ENCODE measurements at regions of chr1 and their contacts with region 1.

Region 1: DNA sequence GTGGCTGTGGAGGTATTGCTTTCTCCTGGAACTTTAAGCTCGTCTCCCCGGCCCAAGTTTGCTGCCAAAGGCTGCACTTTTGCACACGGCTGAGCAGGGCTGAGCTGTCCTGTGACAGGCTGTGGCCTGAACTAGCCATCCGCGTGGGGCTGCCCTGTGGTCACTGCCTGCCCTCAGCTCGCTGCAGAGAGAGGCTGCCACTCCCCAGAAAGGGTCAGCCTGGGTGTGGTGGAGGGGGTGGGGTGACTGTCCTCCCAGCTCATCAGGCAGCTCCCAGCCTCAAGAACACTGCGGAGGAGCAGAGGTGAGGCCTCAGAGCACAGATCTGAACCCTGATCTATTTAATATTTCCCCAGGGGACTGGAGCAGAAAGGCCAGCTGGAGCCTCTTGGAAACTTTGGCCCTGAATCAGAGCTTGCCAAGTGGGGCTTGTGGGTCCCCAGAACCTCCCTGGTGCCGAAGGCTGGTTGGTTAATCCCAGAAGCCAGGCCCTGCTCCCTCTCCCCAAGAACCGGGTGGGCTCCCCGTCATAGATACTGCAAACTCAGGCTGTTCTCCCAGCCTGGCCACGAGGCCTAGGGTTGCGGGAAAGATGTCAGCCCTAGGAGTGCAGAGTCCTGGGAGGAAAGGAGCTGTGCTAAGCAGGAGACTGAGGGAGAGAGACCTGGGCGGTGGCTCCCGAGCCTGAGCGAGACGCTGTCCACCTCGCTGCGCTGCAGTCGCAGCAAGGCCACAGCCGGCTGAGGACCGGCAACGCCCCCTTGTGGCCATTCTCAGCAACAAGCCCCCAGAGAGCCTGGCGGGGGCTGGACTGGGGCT is 125.1 kb upstream of the IPO9 start:
- DNase-seq: peak in 1 of 2 donors; percentile 89
- H3K4me3 ChIP-seq: no peak overlapping the region
- H3K27ac ChIP-seq: peak overlapping the region; percentile 57 to 61
- H3K4me1 ChIP-seq: peaks cover 3 to 14% of the 10 kb centered on the region in 2 donors
- H3K27me3 ChIP-seq: no peaks in the 10 kb centered on the region
- CTCF ChIP-seq: peak; percentile 95 to 97 (median 96)

Region 2: DNA sequence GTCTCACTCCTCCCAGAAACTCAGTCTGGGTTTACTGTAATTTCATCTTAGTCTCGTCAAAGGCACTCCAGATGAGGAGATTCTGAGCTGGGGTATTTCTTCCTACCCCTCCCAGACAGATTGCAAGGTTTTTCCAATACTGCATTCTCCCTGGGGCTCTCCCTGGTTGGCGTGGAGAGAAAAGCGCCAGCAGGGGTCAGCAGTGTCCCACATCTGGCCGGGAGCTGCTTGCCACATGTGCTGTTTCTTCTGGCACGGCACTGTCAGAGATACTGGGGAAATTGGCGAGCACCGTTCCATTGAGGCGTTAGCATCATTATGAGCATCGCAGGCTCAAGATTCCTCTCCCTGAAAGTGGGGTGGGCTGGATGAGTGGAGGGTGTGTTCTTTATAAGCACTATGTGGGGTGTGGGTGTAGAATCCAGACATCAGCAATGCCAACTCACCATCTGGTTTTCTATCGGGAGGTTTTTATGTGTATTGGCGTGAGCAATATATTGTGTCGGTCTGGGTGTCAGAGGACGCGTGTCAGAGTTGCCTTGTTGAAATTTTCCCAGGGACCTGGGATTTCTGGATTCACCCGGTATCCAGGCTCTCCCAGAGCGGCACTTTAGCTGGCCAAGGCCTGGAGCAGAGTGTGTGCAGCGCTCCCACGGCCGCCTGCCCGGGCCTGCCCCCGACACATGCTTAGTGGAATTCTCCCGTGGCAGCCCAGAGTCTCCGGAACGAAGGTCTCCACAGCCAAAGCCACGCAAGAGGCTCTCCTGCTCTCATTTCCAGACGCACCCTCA is 172.9 kb before region 1 on chr1:
- intact Hi-C with region 1: loop called (anchors 1 kb)
- DNase-seq: peak; percentile 51 to 95
- H3K4me3 ChIP-seq: no peak overlapping the region
- H3K27ac ChIP-seq: peak overlapping the region; percentile 51 to 59
- H3K4me1 ChIP-seq: peaks cover 20 to 45% of the 10 kb centered on the region in 2 donors
- H3K27me3 ChIP-seq: no peaks in the 10 kb centered on the region
- CTCF ChIP-seq: peak; percentile 89 to 96 (median 93)

Region 3: DNA sequence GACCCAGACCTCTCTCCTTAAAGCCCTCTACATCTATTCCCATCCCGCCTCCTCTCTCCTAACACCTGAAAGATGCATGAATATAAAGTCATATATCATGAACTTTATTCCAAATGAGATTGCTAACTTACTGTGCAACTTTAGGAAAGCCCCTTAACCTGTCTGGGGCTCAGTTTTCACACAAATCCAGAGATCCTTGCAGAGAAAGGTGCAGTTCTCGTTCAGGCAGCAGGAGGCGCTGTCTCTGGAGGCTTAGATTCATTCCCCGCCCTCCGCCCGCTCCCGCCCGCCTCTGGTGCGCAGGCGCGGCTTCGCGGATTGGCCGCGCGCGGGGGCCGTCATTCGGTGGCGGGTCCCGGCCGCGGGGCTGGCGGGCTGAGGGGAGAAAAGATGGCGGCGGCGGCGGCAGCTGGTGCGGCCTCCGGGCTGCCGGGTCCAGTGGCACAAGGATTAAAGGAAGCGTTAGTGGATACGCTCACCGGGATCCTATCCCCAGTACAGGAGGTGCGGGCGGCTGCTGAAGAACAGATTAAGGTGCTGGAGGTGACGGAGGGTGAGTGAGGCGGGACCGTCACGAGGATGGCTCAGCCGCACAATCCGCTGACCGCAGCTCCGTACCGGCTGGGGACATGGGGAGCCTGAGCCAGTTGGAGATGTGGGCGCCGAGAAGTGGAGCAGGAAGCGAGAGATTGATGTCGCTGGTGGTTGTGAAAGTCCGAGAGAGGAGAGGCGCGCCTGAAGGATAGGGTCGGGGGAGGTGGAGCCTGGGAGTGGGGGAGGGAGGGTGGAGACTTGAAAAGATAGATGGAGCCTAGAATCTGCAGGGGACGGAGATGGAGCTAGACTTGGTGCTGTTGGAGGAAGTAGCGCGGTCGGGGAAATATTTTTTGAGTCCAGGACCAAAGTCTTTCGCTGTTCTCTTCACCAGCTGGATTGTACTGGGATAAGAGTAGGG is 125.3 kb after region 1 on chr1 and contains the start of gene IPO9:
- intact Hi-C with region 1: no loop called
- DNase-seq: peak; percentile 67 to 97
- H3K4me3 ChIP-seq: peak within 1 kb of the TSS; percentile 64 to 84
- H3K27ac ChIP-seq: peak within 1 kb of the TSS; percentile 92 to 94
- H3K4me1 ChIP-seq: peaks cover 3 to 30% of the 10 kb centered on the region in 2 donors
- H3K27me3 ChIP-seq: no peaks in the 10 kb centered on the region
- CTCF ChIP-seq: peak; percentile 91 to 97 (median 96)
- total RNA-seq, gene IPO9: 9.3 TPM

Measured in ascending aorta (tissue), 2 donors.